Gastrocnemius medialis (tissue), 4 donors: ENCODE measurements at regions of chr11 and their contacts with region 1.

Region 1: GRCh38 chr11:75532200-75533048 is 6.7 kb upstream of the GDPD5 start:
- DNase-seq: peak in 1 of 2 donors; percentile 64
- ATAC-seq: peak; percentile 46 to 83
- H3K4me3 ChIP-seq: no peak overlapping the region
- H3K27ac ChIP-seq: no peak overlapping the region
- H3K4me1 ChIP-seq: no peaks in the 10 kb centered on the region
- H3K27me3 ChIP-seq: no peaks in the 10 kb centered on the region
- CTCF ChIP-seq: peak; percentile 88 to 93 (median 92)
- POLR2A ChIP-seq: no peak

Region 2: GRCh38 chr11:75280227-75280701 is 252.2 kb before region 1 on chr11:
- in situ Hi-C with region 1: loop called in 3 of 4 experiments (anchors 10 to 25 kb)
- intact Hi-C with region 1: loop called (anchors 5 kb)
- DNase-seq: peak; percentile 32 to 57
- ATAC-seq: peak; percentile 69 to 71
- H3K4me3 ChIP-seq: no peak overlapping the region
- H3K27ac ChIP-seq: no peak overlapping the region
- H3K4me1 ChIP-seq: no peaks in the 10 kb centered on the region
- H3K27me3 ChIP-seq: no peaks in the 10 kb centered on the region
- CTCF ChIP-seq: peak; percentile 85 to 97 (median 95)
- POLR2A ChIP-seq: no peak

Region 3: DNA sequence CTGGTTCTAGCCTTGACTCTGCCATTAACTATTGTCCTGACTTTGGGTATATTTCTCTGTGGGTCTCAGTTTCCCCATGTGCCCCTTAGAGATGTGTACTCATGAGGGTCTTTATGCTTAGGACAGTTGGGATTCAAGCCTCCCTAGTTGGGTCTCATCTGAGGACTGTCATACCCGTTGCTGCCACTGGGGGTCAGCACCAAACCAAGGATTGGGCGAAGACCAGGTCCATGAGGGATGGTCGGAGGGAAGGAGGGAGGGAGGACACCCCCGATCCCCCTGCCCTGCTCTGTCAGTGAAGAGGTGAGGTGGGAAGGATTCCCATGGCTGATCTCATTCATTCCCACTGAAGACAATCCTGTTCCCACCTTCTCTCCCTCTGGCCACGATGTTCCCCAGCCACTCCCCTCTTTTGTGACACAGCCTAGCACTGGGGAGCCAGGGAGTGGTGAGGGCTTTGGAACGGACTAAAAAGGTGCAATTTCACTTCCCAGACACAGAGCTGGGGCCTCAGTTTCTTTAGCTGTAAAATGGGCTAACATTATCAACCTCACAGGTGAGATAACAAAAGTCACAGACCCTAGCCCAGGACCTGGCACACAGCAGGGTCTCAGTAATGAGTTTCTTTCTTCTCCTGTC is 87.0 kb before region 1 on chr11:
- in situ Hi-C with region 1: loop called (anchors 5 kb)
- intact Hi-C with region 1: loop called (anchors 1 kb)
- DNase-seq: peak; percentile 34 to 51
- ATAC-seq: peak; percentile 78 to 89
- H3K4me3 ChIP-seq: no peak overlapping the region
- H3K27ac ChIP-seq: no peak overlapping the region
- H3K4me1 ChIP-seq: no peaks in the 10 kb centered on the region
- H3K27me3 ChIP-seq: no peaks in the 10 kb centered on the region
- CTCF ChIP-seq: peak; percentile 91 to 98 (median 97)
- POLR2A ChIP-seq: no peak